ENCODE measurements at regions of chr6 and their contacts with region 1.

Region 1: GRCh38 chr6:110039364-110039980 is 61.4 kb downstream of the GPR6 start:
- DNase-seq: peak; percentile 91
- ATAC-seq: peak; percentile 92
- H3K4me3 Mint-ChIP-seq: peak overlapping the region; percentile 81
- H3K27ac Mint-ChIP-seq: peak overlapping the region; percentile 95
- H3K4me1 Mint-ChIP-seq: peaks cover 28% of the 10 kb centered on the region
- H3K27me3 Mint-ChIP-seq: no peaks in the 10 kb centered on the region

Region 2: DNA sequence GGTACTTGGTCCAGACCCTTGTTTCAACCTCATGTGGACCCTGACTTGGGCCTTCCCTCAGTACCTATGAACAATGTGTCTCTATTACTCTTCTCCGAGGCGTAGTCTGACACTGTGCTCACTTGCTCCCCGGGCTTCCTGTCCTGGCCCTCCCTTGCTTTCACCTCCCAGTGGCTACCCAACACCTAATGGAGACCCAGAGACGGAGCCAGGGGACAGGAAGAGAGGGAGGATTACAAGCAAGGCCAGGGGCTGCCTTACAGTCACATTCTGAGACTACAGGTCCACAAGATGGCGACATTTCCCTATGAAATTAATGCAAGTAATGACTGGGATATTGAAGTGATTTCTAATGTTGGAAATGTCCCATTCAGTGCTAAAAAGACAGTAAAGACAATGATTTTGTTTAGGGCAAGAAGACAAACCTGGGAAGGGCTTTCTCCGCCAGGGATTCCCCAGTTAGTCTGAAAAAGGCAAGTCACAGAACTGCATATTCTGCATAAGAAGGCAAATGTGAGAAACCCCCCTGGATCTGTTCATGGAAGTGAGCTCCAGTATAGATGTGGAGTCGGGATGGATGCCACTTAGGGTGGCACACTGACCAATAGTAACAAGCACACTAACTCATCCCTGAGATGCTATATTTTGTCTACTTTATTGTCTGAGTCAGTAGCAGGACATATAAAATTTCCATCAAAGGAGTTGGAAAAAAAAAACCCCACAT is 512.4 kb before region 1 on chr6:
- CTCF ChIA-PET with region 1: interaction called, 53 read pairs
- POLR2A ChIA-PET with region 1: no interaction called
- DNase-seq: peak; percentile 74
- ATAC-seq: peak; percentile 90
- H3K4me3 Mint-ChIP-seq: no peak overlapping the region
- H3K27ac Mint-ChIP-seq: no peak overlapping the region
- H3K4me1 Mint-ChIP-seq: peaks cover 5% of the 10 kb centered on the region
- H3K27me3 Mint-ChIP-seq: no peaks in the 10 kb centered on the region

Region 3: GRCh38 chr6:109705258-109705657 is 334.2 kb before region 1 on chr6:
- CTCF ChIA-PET with region 1: interaction called, 203 read pairs
- POLR2A ChIA-PET with region 1: interaction called, 6 read pairs
- DNase-seq: peak; percentile 87
- ATAC-seq: peak; percentile 98
- H3K4me3 Mint-ChIP-seq: no peak overlapping the region
- H3K27ac Mint-ChIP-seq: no peak overlapping the region
- H3K4me1 Mint-ChIP-seq: peaks cover 9% of the 10 kb centered on the region
- H3K27me3 Mint-ChIP-seq: no peaks in the 10 kb centered on the region

Region 4: DNA sequence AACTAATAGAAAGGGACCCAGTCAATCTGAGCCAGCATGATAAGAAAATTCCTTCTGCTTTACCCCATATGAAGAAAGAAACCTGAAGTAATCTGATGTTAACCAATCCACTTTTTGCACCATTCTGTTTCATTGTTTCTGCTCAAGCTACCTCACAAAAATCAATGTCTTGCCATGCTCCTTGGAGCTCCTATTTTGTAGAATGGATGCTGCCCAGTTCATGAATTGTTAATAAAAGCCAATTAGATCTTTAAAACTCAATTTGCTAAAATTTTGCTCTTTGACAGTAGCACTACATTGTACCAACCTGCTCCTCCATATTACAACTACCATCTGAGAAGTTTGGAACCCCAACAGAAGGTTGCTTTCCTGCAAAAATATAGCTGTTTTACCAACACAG is 177.5 kb before region 1 on chr6:
- CTCF ChIA-PET with region 1: interaction called, 17 read pairs
- POLR2A ChIA-PET with region 1: no interaction called
- DNase-seq: no peak
- ATAC-seq: no peak
- H3K4me3 Mint-ChIP-seq: no peak overlapping the region
- H3K27ac Mint-ChIP-seq: no peak overlapping the region
- H3K4me1 Mint-ChIP-seq: no peaks in the 10 kb centered on the region
- H3K27me3 Mint-ChIP-seq: peaks cover 5% of the 10 kb centered on the region

Region 5: DNA sequence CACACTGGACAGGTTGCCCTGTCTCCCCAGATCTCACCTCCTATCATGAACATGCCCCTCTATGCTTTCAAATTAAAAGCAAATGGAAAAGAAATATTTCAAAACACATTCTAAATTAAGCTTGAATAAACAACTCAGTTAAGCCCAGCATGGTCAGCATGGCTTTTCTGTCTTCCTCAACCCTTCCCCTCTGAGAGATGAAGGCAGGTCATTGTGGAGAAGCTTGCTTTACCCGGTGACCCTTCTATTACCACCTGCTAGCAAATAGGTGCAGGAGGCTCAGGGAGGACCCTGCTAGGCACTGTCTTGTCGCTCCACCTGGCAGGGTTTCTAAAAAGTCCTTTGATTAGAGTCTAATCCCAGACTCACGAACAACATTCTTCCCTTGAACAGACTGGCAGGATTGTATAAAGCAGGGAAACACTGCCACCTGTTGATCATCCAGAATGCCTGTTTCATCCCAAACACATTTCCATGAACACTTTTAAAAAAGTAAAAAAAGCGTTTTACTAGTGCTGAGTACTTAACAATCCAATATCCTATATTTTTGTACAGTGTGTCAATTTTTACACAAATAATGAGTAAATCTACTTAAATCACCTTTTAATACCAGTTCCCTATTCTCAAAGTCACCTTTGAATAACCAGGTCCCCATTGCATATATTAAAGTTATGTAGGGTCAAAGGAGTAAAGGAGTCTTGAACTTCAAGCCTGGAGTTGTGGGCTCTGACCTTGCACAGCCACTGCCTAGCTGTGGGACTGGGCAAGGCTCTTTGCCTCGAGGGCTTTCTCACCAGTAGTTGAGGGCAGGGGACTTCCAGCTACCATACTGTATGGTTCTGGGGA is 14.1 kb after region 1 on chr6:
- CTCF ChIA-PET with region 1: interaction called, 37 read pairs
- POLR2A ChIA-PET with region 1: no interaction called
- DNase-seq: no peak
- ATAC-seq: no peak
- H3K4me3 Mint-ChIP-seq: no peak overlapping the region
- H3K27ac Mint-ChIP-seq: no peak overlapping the region
- H3K4me1 Mint-ChIP-seq: no peaks in the 10 kb centered on the region
- H3K27me3 Mint-ChIP-seq: peaks cover 21% of the 10 kb centered on the region

Region 6: DNA sequence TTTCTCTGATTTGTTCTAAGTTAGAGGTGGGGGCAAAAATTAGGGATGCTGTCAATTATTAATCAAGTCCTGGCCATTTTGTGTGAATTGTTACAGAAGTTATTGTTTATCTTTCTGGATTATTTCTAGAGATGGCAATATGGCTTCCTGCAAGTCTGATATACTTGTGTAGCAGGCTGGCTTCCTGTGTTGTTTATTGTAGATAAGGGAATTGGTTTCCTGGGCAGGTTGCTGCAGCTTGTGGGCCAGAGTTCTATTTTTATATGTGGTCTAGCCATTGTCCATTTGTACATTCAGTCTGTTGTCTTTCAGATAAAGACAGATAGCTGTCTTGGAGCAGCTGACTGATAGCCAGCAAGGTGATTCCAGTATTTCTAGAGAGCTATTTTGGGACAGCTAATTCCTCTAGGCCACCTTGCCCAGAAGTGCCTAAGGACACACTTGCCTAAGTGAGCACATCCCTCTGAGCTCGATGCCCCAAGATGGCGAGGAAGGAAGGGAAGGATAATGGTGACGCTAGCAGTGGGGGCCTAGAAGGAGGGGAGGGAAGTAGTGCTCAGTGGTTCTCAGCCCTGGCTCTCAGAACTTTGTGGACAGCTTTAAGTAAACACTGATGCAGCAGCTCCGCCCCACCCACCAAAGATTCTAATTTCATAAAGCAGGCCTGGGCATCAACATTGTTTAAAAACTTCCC is 350.4 kb after region 1 on chr6:
- CTCF ChIA-PET with region 1: interaction called, 123 read pairs
- POLR2A ChIA-PET with region 1: interaction called, 5 read pairs
- DNase-seq: no peak
- ATAC-seq: peak; percentile 51
- H3K4me3 Mint-ChIP-seq: no peak overlapping the region
- H3K27ac Mint-ChIP-seq: peak overlapping the region; percentile 69
- H3K4me1 Mint-ChIP-seq: peaks cover 23% of the 10 kb centered on the region
- H3K27me3 Mint-ChIP-seq: no peaks in the 10 kb centered on the region